Activated T-helper 1 cell treated with anti-CD3 and anti-CD28 coated beads, Interleukin-12 subunit alpha, Interleukin-12 subunit beta, Interleukin-2, Interleukin-4 antibody, amounts not matched to agents 30 ng/mL and 10 ng/mL and 1 ng/mL, durations not matched to agents 14 hours and 24 hours and 36 hours (primary cell): ENCODE measurements at regions of chr1 and their contacts with region 1.

Region 1: GRCh38 chr1:9910425-9911178 is 533 bp upstream of the CTNNBIP1 start:
- DNase-seq: peak; percentile 100
- H3K4me3 Mint-ChIP-seq: peak overlapping the region; percentile 92
- H3K27ac Mint-ChIP-seq: peak overlapping the region; percentile 97
- H3K4me1 Mint-ChIP-seq: peaks cover 30% of the 10 kb centered on the region
- H3K27me3 Mint-ChIP-seq: peaks cover 7% of the 10 kb centered on the region

Region 2: DNA sequence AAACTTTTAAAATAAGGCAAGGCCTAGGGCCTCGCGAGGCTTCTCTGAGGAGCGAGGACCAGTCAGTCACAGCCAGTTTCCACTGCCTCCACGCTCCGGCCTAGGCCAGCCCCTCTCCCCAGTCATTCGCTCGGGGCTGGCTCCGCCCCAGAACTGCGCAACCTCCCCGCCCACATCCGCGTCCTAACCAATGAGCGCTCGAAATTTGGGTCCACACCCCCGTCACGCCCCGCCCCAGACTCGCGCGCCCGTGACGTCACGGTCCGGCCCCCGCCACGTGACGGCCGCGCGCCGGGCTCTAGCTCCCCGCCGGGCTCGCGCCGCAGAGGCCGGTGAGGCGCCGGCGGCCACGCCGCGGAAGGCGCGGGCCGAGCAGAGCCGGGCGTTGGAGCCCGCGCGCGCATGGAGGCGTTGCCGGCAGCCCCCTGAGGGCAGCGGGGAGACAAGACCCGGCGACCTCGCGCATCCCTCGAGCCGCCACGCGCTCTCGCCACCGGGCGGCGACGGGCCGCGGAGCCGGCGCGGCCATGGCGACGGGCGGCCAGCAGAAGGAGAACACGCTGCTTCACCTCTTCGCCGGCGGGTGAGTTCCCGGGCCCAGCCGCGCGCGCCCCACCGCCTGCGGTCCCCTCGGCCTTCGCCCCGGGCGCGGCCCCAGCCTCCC is 371.3 kb before region 1 on chr1 and contains the start of gene SLC25A33:
- intact Hi-C with region 1: loop called (anchors 1 kb)
- DNase-seq: peak; percentile 98
- H3K4me3 Mint-ChIP-seq: peak within 1 kb of the TSS; percentile 94
- H3K27ac Mint-ChIP-seq: peak within 1 kb of the TSS; percentile 88
- H3K4me1 Mint-ChIP-seq: peaks cover 37% of the 10 kb centered on the region
- H3K27me3 Mint-ChIP-seq: no peaks in the 10 kb centered on the region
- total RNA-seq, gene SLC25A33: 12.5 and 13.5 TPM in 2 replicates

Region 3: GRCh38 chr1:9728451-9729295 is 181.9 kb before region 1 on chr1:
- intact Hi-C with region 1: loop called (anchors 2 kb)
- DNase-seq: peak; percentile 54
- H3K4me3 Mint-ChIP-seq: peak overlapping the region; percentile 72
- H3K27ac Mint-ChIP-seq: peak overlapping the region; percentile 83
- H3K4me1 Mint-ChIP-seq: peaks cover 56% of the 10 kb centered on the region
- H3K27me3 Mint-ChIP-seq: no peaks in the 10 kb centered on the region

Region 4: DNA sequence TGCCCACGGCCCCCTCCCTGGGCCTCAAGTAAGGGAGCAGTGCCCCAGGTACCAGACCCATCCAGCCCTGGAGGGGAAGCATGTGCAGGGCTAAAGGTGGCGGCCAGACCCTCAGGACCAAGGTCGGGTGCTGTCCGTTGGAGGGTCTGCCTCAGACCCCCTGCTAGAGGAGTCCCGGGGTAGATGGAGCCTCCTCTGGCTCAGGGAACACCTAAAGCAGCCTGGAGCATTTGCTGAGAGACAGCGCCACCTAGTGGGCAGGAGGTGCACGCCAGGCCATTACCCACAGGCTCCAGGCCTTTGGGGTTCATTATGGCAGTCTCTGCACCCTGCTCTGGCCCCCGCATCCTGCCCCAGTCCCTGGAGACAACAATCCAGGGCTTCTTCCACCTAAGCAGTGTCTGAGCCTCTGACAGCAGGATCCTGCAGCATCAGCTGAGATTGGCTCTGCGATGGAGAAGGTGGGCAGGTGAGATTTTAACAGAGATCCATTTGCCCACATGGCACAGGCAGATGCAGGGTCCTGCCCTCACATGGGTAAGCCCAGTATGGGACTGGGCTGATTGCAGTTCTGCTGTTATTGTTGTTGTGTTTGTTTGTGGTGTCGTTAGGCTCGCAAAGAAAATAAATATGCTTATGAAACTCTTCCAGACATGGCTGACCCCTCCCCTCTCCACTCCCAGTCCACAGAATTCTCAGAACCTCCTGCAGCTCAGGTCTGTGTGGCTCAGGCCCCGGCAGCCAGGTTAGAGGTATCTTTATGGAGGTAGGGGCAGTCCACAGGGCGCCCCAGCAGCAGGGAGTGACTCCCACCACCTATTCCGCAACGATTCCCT is 43.0 kb before region 1 on chr1:
- intact Hi-C with region 1: no loop called
- DNase-seq: peak; percentile 79
- H3K4me3 Mint-ChIP-seq: no peak overlapping the region
- H3K27ac Mint-ChIP-seq: no peak overlapping the region
- H3K4me1 Mint-ChIP-seq: no peaks in the 10 kb centered on the region
- H3K27me3 Mint-ChIP-seq: no peaks in the 10 kb centered on the region

Region 5: GRCh38 chr1:9942939-9943788 is 32.6 kb after region 1 on chr1 and contains the starts of genes LZIC and NMNAT1:
- intact Hi-C with region 1: loop called (anchors 1 kb)
- DNase-seq: peak; percentile 88
- H3K4me3 Mint-ChIP-seq: peak within 1 kb of the TSS; percentile 100
- H3K27ac Mint-ChIP-seq: peak within 1 kb of the TSS; percentile 97
- H3K4me1 Mint-ChIP-seq: peaks cover 12% of the 10 kb centered on the region
- H3K27me3 Mint-ChIP-seq: no peaks in the 10 kb centered on the region
- total RNA-seq, gene LZIC: 29.9 and 35.9 TPM in 2 replicates
- total RNA-seq, gene NMNAT1: 5.0 and 5.8 TPM in 2 replicates

Region 6: GRCh38 chr1:10398734-10399623 is 488.4 kb after region 1 on chr1 and contains the start of gene PGD:
- intact Hi-C with region 1: loop called (anchors 2 kb)
- DNase-seq: peak; percentile 98
- H3K4me3 Mint-ChIP-seq: peak within 1 kb of the TSS; percentile 92
- H3K27ac Mint-ChIP-seq: peak within 1 kb of the TSS; percentile 77
- H3K4me1 Mint-ChIP-seq: peaks cover 25% of the 10 kb centered on the region
- H3K27me3 Mint-ChIP-seq: no peaks in the 10 kb centered on the region
- total RNA-seq, gene PGD: 131 and 142 TPM in 2 replicates

Region 7: GRCh38 chr1:10472220-10473144 is 561.9 kb after region 1 on chr1 and contains the start of gene DFFA:
- intact Hi-C with region 1: loop called (anchors 1 kb)
- DNase-seq: peak; percentile 90
- H3K4me3 Mint-ChIP-seq: peak within 1 kb of the TSS; percentile 89
- H3K27ac Mint-ChIP-seq: peak within 1 kb of the TSS; percentile 85
- H3K4me1 Mint-ChIP-seq: peaks cover 45% of the 10 kb centered on the region
- H3K27me3 Mint-ChIP-seq: no peaks in the 10 kb centered on the region
- total RNA-seq, gene DFFA: 54.7 and 60.1 TPM in 2 replicates